Right ventricle myocardium inferior (tissue), 1 donor: ENCODE measurements at regions of chr10 and their contacts with region 1.

Region 1: DNA sequence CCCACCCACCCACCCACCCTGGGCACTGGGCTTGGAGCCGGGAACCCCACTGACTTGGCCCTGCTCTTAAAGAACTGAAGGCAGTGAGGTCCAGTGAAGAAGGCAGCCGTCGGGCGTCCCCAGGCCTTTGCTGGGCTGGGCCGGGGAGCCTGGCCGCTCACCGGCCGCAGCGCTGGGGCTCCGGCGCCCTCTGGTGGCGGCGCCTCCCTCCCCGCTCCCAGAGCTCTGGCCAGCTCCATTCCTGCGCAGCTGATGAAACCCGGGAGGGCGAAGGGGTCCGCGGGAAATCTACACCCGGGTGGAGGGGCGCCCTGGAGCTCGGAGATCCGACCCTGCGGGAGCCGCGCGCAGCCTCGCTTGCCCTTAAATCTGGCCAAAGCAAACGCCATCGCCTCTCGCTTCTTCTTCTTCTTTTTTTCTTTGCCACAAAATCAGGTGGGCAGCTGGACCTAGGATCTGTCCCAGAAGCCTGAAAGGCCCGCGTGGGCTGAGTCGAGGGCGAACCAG is 1.7 kb upstream of the CXCL12 start:
- DNase-seq: peak; percentile 81
- ATAC-seq: peak; percentile 80

Region 2: DNA sequence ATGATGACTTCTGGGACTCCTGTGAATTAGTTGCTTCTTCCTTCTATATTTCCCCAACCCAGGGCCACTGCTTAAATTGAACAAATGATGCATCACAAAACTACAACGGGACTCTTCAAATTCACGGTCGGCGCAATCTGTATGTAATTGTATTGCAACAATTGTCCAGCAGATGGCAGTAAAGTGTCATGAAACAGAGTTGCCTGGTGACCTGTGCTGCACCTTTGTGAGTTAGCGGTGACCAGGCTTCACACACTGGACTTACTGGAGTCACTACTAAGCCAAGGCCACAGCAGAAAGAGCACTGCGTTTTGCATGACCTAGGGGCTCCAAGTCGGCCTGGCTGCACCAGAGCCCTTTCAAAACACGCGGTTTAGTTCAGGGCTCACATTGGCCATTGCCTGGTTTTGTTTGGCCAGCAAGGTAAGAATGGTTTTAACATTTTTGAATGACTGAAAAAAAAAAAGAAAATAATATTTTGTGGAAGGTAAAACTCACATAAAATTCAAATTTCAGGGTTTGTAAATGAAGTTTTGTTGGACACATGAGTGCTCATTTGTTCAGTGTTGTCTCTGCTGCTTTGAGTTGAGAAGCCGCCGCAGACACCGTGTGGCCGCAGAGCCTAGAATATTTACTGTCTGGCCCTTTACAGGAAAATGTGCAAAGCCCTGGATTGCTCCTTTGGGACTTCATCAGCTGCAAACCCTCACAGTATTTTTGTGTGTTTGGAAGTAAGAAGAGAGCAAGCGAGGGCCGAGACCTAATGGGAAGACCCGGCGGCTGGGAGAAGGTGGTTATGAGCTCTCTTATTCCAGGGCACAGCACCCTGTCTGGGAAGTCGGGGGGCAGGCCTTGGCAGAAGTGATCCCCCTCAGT is 714.7 kb before region 1 on chr10:
- intact Hi-C with region 1: loop called (anchors 1 kb)
- DNase-seq: peak; percentile 9
- ATAC-seq: peak; percentile 46

Region 3: DNA sequence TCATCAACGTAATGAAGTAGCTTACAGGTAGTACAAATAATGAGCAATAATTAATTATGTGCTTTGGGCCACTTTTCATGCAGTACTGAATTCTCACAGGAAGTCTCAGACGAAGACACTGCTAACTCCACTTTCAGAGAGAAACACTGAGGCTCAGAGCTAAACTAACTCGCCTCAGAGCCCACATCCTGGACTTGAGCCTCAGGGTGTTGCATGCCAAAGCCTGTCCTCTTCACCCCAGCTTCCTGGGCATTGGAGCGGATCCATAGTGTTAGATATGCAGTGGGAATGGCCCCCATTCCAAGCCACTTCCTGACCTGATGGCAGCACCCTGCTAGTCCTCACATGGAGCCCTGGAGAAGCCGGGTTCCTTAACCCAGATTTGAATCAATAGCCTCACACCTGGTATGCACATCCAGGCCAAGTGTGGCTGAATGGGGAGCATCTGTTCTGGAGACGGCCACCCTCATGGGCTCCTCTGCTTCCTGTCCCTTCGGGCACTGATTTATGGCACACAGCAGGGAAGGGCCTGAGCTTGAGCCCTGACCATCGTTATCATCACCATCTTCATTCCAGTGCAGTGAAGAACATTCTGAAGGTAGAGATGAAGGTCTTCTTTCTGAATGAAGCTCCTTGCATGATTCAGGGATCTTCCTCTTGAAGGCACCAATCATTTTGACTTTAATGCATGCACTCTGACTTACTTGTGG is 472.8 kb before region 1 on chr10:
- intact Hi-C with region 1: loop called (anchors 5 kb)
- DNase-seq: no peak
- ATAC-seq: no peak

Region 4: DNA sequence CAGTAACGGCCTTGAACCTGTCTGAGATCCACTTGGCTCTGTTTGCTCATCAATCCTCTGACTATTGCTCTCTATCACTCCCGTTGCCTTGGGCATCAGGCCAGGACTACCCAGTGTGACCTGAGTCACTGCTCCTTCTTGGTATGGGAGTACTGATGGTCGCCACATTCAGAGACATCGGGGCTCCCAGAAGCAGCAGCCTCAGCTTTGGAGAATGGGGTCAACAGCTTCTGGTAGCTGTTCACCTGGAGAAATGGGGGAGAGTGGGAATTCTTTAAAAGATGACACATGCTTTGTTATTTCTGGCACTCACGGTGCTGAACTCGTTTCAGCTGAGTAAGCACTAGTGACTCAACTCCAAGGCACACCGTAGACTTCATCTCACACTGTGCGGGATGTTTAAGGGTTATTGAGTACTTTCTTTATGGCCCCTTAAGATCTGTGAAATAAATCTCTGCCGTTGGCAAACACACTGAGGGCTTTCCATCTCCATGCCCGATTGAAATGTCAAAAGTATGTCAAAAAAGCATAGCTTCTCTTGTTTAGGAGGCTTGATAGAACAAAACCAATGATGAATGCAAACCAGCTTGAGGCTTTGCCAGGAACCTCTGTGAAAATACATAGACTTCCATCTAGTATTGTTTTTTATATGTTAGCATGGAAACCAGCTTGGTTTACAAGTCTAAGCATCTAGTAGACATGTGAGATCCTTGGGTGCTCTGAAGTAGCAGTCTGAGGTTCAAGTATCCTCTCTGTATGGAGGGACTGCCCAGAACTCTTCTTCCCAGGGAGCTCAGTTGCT is 334.8 kb before region 1 on chr10:
- intact Hi-C with region 1: loop called (anchors 10 kb)
- DNase-seq: no peak
- ATAC-seq: no peak

Region 5: DNA sequence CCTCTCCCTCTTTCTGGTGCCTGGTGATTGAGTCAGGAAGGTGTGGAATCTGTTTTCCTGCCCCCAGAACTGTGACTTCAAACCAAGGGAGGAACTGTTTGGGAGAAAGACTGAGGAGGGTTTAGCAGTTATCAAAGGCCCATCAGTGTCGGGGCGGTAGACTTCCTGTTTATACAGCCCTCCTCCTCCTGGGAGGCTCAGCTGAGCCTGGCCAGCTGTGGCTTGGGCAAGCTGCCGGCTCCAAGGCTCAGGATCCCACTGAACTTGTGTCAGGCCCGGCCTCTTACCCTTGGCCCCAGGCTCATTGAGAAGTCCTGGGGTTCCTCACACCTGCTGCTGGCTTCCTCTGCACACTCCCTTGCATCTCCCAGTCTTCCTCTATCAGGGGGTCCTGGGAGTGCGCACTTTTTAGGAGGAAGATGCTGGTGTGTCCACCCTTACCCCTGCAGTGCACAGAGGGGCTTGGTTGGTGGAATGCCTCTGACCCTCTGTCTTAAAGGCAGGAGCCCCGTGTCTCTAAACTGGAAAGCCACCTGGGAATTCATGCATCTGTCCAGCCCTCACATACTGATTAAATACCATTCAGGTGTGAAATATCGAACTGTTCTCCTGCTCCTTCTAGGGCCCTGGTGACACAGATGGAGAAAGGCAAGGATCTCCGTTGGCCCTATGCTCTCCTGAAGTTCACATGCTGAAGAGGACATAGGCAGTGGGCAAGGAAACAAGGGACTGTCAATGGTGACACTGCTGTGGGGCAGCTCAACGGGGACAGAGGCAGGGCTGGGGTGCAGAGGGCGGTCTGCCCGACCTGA is 34.1 kb before region 1 on chr10:
- intact Hi-C with region 1: no loop called
- DNase-seq: no peak
- ATAC-seq: peak; percentile 95

Region 6: GRCh38 chr10:44457259-44457658 is 70.7 kb after region 1 on chr10:
- intact Hi-C with region 1: no loop called
- DNase-seq: no peak
- ATAC-seq: no peak

Region 7: DNA sequence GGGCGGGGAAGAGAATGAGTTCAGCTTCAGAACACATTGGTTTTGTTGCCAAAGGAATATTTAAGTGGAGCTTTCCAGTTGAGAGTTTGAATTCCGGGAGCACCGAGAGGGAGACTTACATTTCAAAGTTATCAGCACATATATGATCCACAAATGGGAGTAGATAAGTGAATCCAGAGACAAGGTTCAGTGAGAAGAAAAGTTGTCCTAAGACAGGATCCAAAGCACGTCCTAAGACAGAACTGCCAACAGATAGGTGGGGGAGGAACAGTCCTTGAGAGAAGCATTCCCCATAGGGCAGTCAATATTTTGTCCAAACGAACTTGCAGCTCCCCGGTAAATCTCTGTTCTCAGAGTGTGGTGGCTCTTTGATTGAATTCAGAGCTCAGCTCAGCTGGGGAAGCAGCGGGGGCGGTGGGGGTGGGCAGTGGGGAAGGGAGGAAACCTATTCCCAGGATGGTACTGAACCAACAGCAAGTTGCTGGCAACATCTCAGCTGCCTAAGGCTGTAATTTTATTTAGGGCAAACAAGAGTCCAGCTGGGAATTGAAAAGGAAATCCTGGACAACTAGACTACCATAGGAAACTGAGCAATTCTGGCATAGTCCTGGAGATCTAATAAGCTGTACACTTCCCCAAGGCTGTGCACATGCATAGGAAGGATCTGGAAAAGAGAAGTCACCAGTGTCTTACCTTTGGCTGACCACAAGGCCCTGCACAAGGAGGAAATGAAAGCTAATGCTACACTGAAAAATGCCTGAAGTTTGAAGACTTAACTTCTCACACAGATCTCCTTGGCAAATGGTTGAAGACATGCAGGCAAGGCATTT is 92.5 kb after region 1 on chr10:
- intact Hi-C with region 1: loop called (anchors 5 kb)
- DNase-seq: peak; percentile 41
- ATAC-seq: peak; percentile 69

Region 8: GRCh38 chr10:44619975-44620374 is 233.4 kb after region 1 on chr10:
- intact Hi-C with region 1: no loop called
- DNase-seq: no peak
- ATAC-seq: no peak

Region 9: GRCh38 chr10:44733501-44734488 is 347.2 kb after region 1 on chr10:
- intact Hi-C with region 1: no loop called
- DNase-seq: no peak
- ATAC-seq: no peak